ENCODE measurements at regions of chr13 and their contacts with region 1.

Region 1: DNA sequence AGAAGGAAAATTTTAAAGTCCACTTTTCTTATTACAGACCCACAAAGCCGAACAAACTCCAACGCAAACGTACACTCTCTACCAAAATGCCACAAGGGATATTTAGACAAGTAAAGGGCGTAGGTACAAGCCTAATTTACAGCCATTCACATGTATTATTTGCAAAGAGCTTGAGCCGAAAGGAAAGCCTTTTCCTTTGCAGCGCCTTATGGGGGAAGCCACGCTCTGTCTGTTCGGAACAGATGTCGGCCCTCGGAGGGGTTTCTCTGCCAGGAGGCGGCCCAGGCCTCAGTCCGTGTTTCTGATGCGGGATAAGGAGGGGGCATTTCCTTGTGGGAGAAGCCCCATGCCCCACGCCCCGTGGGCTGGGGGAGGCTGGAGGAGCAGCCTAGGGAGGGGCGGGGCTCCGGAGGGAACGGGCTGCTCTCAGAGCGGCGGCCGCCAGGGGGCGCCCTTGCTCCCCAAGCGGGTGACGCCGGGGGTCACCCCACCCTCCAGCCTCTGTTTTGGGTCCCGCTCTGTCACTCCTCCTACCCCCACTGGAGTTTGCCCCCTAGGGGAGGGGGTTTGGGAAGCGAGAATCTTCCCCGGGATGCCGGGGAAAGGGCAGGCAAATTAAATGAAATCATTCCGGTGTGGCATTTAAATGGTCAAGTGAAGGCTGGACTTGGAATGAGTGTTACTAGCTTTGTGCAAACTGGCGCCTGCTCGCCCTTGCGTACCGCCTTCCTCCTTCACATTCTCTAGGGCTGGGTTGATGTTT is 2.9 kb downstream of the HTR2A start:
- H3K4me3 ChIP-seq: peak overlapping the region; percentile 46
- H3K27ac ChIP-seq: no peak overlapping the region
- H3K4me1 ChIP-seq: no peaks in the 10 kb centered on the region
- CTCF ChIP-seq: no peak; the same call in 1 of the 2 replicates

Region 2: GRCh38 chr13:46728777-46729176 is 165.2 kb before region 1 on chr13:
- CTCF ChIA-PET with region 1: no interaction called
- POLR2A ChIA-PET with region 1: no interaction called
- H3K4me3 ChIP-seq: no peak overlapping the region
- H3K27ac ChIP-seq: no peak overlapping the region
- H3K4me1 ChIP-seq: no peaks in the 10 kb centered on the region
- CTCF ChIP-seq: no peak

Region 3: GRCh38 chr13:46905247-46905646 is 11.3 kb after region 1 on chr13:
- CTCF ChIA-PET with region 1: interaction called, 10 read pairs
- POLR2A ChIA-PET with region 1: no interaction called
- H3K4me3 ChIP-seq: no peak overlapping the region
- H3K27ac ChIP-seq: no peak overlapping the region
- H3K4me1 ChIP-seq: no peaks in the 10 kb centered on the region
- CTCF ChIP-seq: no peak

Region 4: GRCh38 chr13:47076500-47076899 is 182.5 kb after region 1 on chr13:
- CTCF ChIA-PET with region 1: no interaction called
- POLR2A ChIA-PET with region 1: no interaction called
- H3K4me3 ChIP-seq: no peak overlapping the region
- H3K27ac ChIP-seq: no peak overlapping the region
- H3K4me1 ChIP-seq: no peaks in the 10 kb centered on the region
- CTCF ChIP-seq: no peak

Region 5: GRCh38 chr13:47146991-47147811 is 253.2 kb after region 1 on chr13:
- CTCF ChIA-PET with region 1: no interaction called
- POLR2A ChIA-PET with region 1: no interaction called
- H3K4me3 ChIP-seq: no peak overlapping the region
- H3K27ac ChIP-seq: no peak overlapping the region
- H3K4me1 ChIP-seq: no peaks in the 10 kb centered on the region; the same call in 1 of the 2 replicates
- CTCF ChIP-seq: no peak

Region 6: GRCh38 chr13:47499358-47500150 is 605.6 kb after region 1 on chr13:
- CTCF ChIA-PET with region 1: no interaction called
- POLR2A ChIA-PET with region 1: no interaction called
- H3K4me3 ChIP-seq: no peak overlapping the region
- H3K27ac ChIP-seq: no peak overlapping the region
- H3K4me1 ChIP-seq: no peaks in the 10 kb centered on the region
- CTCF ChIP-seq: no peak